ENCODE measurements at regions of chr3 and their contacts with region 1.

Region 1: DNA sequence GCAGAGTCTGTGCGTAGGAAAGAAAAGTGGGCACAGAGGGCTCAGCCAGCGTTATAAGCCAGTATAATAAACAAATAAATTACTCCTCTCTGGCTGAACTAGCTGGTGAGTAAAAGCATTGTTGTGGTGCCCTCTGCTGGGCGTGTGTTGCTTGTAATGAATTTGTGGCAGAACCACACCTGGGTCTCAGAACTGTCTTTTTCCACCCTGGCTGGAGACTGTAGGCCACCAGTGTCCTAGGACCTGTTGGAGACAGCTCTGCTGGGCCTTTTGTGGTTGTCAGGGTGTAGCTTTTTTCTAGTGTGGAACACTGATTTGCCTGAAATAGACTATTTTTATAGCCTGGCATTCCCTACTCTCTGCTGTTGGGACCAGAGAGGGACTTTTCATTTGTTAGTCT is 130.5 kb upstream of the EIF1B start:
- DNase-seq: peak; percentile 10
- H3K4me3 ChIP-seq: no peak overlapping the region
- CTCF ChIP-seq: peak; percentile 73

Region 2: DNA sequence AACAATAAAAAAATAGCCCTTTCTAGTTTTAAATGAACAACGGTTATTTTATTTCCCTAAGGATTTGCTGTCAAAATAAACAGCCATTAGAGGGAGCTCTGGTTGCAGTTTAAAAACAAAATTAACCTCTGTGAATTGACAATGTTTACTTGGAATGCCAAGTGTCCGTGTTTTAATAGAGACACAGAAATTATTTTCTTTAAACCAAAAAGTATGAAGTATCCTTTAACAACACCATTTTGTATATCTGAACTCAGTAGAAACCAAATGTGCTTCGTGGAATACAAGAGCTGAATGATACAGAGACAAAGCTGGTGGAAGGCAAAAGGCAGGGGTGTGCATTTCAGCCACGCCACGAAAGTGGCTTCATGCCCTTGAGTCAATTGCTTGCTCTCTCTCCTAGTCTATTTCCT is 637.1 kb before region 1 on chr3:
- CTCF ChIA-PET with region 1: interaction called, 32 read pairs
- POLR2A ChIA-PET with region 1: no interaction called
- DNase-seq: no peak
- H3K4me3 ChIP-seq: no peak overlapping the region
- CTCF ChIP-seq: peak; percentile 14

Region 3: DNA sequence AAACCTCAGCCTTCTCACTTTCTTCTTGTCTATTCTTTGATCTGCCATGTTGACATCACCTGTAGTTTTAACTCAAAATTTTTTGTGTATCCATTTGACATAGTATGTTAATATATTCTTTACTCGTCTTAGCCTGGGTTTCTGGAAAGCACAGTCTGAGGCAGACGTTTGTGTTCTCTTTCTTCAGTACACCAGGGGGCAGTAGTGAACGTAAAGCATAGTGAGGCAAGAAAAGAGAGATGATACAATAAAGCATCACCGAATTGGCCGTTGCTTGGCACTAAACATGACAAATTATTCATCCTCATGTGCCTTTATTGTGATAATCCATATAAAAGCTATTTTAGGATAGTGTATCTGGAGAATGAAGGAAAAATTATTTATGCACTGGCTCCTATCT is 510.6 kb before region 1 on chr3:
- CTCF ChIA-PET with region 1: interaction called, 49 read pairs
- POLR2A ChIA-PET with region 1: no interaction called
- DNase-seq: peak; percentile 4
- H3K4me3 ChIP-seq: no peak overlapping the region
- CTCF ChIP-seq: peak; percentile 61

Region 4: GRCh38 chr3:39724233-39724846 is 454.7 kb before region 1 on chr3:
- CTCF ChIA-PET with region 1: interaction called, 32 read pairs
- POLR2A ChIA-PET with region 1: no interaction called
- DNase-seq: no peak
- H3K4me3 ChIP-seq: no peak overlapping the region
- CTCF ChIP-seq: no peak

Region 5: GRCh38 chr3:39990532-39990931 is 188.5 kb before region 1 on chr3:
- CTCF ChIA-PET with region 1: interaction called, 14 read pairs
- POLR2A ChIA-PET with region 1: no interaction called
- DNase-seq: no peak
- H3K4me3 ChIP-seq: no peak overlapping the region
- CTCF ChIP-seq: peak; percentile 50

Region 6: DNA sequence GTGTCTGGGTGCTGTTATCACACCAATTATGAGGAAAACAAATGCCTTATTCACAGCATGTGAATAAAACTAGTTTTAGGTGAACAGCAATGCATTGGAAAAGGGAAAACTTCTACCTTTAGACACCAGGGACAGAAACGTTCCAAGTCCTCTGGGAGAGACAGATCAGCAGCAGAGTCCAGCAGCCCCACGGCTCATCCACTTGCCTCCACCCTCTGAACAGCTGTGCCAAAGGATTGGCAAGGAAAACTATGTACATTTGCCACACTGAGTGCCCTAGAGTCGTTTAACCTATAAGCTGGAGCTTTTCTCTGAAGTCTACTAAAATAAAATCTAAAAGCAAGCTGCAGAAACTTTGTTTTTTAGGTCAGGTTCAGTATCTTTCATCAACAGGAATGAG is 22.8 kb after region 1 on chr3:
- CTCF ChIA-PET with region 1: no interaction called
- POLR2A ChIA-PET with region 1: no interaction called
- DNase-seq: no peak
- H3K4me3 ChIP-seq: no peak overlapping the region
- CTCF ChIP-seq: no peak

Region 7: DNA sequence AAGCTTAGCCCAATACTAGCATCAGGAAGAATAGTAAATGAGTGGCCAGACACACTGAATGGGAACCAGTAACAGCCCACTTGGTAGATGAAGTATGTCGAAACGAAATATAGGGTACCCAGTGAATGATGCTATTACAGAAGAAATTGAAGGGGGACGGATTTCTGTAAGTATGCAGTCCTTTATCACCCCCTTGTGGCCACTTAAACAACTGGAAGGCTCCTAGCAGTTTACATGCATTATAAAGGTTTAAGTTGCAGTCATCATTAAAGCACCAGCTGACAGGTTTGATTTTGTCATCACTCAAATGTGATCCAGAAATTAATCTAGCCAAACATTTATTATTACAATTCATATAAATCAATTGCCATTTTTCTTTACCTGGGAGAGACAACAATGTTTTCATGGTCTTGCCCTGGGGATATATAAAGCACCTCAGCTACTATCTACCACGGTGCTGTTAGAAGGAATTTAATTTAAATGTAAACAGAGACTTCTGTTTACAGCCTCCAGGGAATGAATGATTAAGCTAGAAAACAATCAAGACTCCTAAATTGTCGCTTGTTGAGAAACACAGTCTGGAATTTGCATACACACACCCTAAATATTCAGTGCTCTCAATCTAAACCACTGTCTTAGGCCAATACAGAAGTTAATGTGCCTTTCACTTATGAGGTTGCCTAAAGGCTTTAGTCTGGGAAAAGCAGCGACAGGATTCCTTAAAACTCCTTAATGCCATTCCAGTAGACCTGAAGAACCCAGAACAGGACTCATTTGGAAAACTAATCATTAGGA is 138.2 kb after region 1 on chr3:
- CTCF ChIA-PET with region 1: interaction called, 11 read pairs
- POLR2A ChIA-PET with region 1: interaction called, 3 read pairs
- DNase-seq: peak; percentile 28
- H3K4me3 ChIP-seq: no peak overlapping the region
- CTCF ChIP-seq: peak; percentile 66